Aorta (tissue), 5 donors: ENCODE measurements at regions of chr9 and their contacts with region 1.

Region 1: GRCh38 chr9:122904823-122905710 is at the start of gene RC3H2:
- DNase-seq: peak; percentile 99
- ATAC-seq: peak; percentile 100
- H3K4me3 ChIP-seq: peak within 1 kb of the TSS; percentile 87 to 90
- H3K27ac ChIP-seq: peak within 1 kb of the TSS; percentile 64 to 83
- H3K4me1 ChIP-seq: no peaks in the 10 kb centered on the region
- H3K27me3 ChIP-seq: no peaks in the 10 kb centered on the region
- total RNA-seq, gene RC3H2: 52.7 to 54.1 TPM

Region 2: DNA sequence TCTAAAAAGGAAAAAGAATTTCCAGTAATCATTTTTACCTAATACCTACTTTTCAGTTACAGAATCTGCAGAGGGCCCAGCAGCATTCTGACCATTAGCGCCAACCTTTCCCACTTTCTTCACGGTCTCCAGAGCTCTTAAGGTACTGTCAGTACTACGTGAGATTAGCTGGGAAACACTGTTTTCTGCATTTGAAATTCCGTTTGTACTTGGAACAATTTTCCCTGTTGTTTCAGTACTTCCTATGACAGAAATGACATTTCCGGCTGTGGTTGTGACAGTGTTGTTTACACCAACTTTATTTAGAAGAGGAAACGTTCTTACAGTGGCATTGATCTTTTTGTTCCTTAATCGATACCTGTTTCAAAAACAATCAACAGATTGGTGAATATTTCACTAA is 39.8 kb before region 1 on chr9:
- intact Hi-C with region 1: no loop called
- DNase-seq: no peak
- ATAC-seq: no peak
- H3K4me3 ChIP-seq: no peak overlapping the region
- H3K27ac ChIP-seq: no peak overlapping the region
- H3K4me1 ChIP-seq: no peaks in the 10 kb centered on the region
- H3K27me3 ChIP-seq: no peaks in the 10 kb centered on the region

Region 3: GRCh38 chr9:122940603-122941559 is 35.8 kb after region 1 on chr9 and contains the start of gene RABGAP1:
- intact Hi-C with region 1: loop called in 1 of 2 experiments (anchors 5 kb)
- DNase-seq: peak; percentile 99 to 100
- ATAC-seq: peak; percentile 99
- H3K4me3 ChIP-seq: peak within 1 kb of the TSS; percentile 67 to 85
- H3K27ac ChIP-seq: peak within 1 kb of the TSS; percentile 61 to 63
- H3K4me1 ChIP-seq: peaks cover 0 to 2% of the 10 kb centered on the region in 2 donors
- H3K27me3 ChIP-seq: no peaks in the 10 kb centered on the region
- total RNA-seq, gene RABGAP1: 95.6 to 100 TPM

Region 4: DNA sequence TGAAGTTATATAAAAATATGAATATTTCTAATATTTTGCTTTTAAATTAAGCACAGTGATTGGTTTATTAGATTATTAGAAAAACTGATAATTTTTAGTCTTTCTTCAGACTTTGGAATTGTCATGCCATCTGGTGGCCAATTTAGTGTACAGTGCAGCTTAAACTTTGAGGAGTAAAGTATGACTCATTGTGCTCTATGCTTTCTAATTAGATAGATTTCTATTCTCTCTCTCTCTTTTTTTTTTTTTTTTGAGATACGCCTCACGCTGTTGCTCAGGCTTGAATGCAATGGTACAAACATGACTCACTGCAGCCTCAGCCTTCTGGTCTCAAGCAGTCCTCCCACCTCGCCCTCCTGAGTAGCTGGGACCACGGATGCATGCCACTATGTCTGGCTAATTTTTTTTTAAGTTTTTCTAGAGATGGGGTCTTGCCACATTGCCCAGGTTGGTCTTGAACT is 86.3 kb after region 1 on chr9:
- intact Hi-C with region 1: loop called in 1 of 2 experiments (anchors 5 kb)
- DNase-seq: peak in 1 of 2 donors; percentile 51
- ATAC-seq: peak; percentile 83
- H3K4me3 ChIP-seq: no peak overlapping the region
- H3K27ac ChIP-seq: peak overlapping the region in 1 of 2 donors; percentile 48
- H3K4me1 ChIP-seq: no peaks in the 10 kb centered on the region
- H3K27me3 ChIP-seq: no peaks in the 10 kb centered on the region